HCT116 (cell line): ENCODE measurements at regions of chr4 and their contacts with region 1.

Region 1: DNA sequence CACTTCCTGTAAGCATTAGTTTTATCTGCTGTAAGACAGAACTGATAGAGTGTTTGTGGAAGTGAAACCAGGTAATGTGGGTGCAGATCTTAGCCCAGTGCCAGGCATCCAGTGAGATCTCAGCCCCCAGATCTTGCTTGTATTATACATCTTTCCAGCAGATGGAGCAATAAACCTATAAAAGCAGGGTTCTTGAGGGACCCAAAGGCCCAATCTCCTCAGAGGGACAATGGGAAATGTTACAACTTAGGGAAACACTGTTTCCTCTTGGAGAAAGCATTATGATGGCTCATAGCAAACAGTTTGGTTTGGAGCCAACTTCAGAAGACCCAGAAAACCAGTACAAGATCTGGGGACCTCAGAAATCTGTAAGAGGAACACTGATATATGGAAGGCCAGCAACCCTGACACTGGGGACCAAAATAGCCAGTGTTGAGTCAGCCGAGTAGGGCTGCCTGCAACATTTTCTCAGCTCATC is 206.3 kb downstream of the SLC7A11 start:
- DNase-seq: peak; percentile 53
- ATAC-seq: peak; percentile 96
- H3K4me3 ChIP-seq: no peak overlapping the region
- H3K27ac ChIP-seq: no peak overlapping the region
- H3K4me1 ChIP-seq: no peaks in the 10 kb centered on the region
- H3K27me3 ChIP-seq: no peaks in the 10 kb centered on the region
- CTCF ChIP-seq: peak; percentile 50 to 87 (median 71)
- POLR2A ChIP-seq: no peak
- RAD21 ChIP-seq: peak; percentile 95

Region 2: GRCh38 chr4:137735561-137736104 is 300.2 kb before region 1 on chr4:
- CTCF ChIA-PET with region 1: interaction called, 6 read pairs
- POLR2A ChIA-PET with region 1: no interaction called
- RAD21 ChIA-PET with region 1: no interaction called
- intact Hi-C with region 1: loop called (anchors 10 kb)
- DNase-seq: no peak
- ATAC-seq: no peak
- H3K4me3 ChIP-seq: no peak overlapping the region
- H3K27ac ChIP-seq: no peak overlapping the region
- H3K4me1 ChIP-seq: no peaks in the 10 kb centered on the region
- H3K27me3 ChIP-seq: no peaks in the 10 kb centered on the region
- CTCF ChIP-seq: no peak
- POLR2A ChIP-seq: no peak
- RAD21 ChIP-seq: no peak

Region 3: GRCh38 chr4:137981282-137981681 is 54.5 kb before region 1 on chr4:
- CTCF ChIA-PET with region 1: no interaction called
- POLR2A ChIA-PET with region 1: no interaction called
- RAD21 ChIA-PET with region 1: no interaction called
- intact Hi-C with region 1: no loop called
- DNase-seq: peak; percentile 31
- ATAC-seq: peak; percentile 73
- H3K4me3 ChIP-seq: no peak overlapping the region
- H3K27ac ChIP-seq: no peak overlapping the region
- H3K4me1 ChIP-seq: peaks cover 11 to 16% of the 10 kb centered on the region in 2 experiments
- H3K27me3 ChIP-seq: no peaks in the 10 kb centered on the region
- CTCF ChIP-seq: no peak; a peak in 2 of 6 replicates
- POLR2A ChIP-seq: no peak
- RAD21 ChIP-seq: 0 out of 2 replicates have a peak, but pooled peaks have one; percentile 10

Region 4: DNA sequence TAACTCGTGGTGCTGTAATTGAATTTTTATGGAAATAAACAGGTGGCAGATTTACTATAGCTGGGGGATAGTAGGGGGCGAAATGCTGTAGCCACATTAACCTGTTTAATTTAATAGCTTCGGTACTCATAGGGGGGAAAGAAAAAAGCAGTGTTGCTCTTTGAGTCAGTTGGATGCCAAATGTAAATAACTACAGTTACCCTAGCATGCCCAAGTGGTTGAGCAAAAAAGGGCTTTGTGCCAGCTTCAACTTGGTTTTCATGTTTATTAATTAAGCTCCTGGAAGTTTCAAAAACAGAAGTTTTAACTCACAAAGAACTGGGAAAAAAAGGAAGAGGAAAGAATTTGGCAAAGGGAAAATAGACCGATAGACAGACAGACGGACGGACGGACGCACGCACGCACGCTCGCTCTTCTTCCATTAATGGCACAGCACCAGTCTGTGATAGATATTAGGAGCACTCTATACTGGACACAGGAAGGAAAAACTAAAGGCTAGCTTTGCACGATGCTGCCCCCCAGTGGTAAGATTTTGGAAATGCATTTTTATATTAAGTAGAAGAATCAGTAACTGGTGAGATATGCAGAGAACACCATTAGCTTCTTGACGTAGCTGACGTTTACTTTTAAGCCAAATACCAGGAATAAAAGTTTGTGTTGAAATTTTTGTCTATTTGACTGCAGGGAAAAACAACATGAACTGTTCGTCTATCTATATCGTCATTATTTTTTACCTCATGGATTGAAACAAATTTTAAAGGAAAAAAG is 54.5 kb after region 1 on chr4:
- CTCF ChIA-PET with region 1: interaction called, 40 read pairs
- POLR2A ChIA-PET with region 1: interaction called, 4 read pairs
- RAD21 ChIA-PET with region 1: interaction called, 7 to 10 read pairs
- intact Hi-C with region 1: loop called (anchors 1 kb)
- DNase-seq: peak; percentile 76
- ATAC-seq: peak; percentile 94
- H3K4me3 ChIP-seq: peak overlapping the region; percentile 31 to 51
- H3K27ac ChIP-seq: no peak overlapping the region
- H3K4me1 ChIP-seq: peaks cover 0 to 13% of the 10 kb centered on the region in 2 experiments; a peak in 2 of 4 replicates
- H3K27me3 ChIP-seq: no peaks in the 10 kb centered on the region
- CTCF ChIP-seq: peak; percentile 66 to 83 (median 78)
- POLR2A ChIP-seq: no peak
- RAD21 ChIP-seq: peak; percentile 91

Region 5: DNA sequence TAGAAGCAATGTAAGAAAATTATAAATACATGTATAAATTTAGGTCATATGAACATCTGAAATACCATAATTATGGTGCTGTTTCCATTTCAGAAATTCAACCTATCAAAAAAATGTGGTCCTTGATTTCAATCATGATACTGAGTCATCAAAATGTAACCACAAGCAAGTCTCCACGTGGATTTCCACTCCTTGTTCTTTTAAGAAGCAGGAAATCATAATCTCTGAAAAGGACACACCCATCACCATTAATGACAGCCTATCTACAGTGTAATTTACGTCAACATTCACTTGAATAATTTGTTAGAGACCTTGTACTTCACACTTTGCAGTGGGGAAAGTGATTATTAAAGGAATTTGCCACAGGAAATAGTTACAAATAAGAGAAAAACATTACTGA is 224.0 kb after region 1 on chr4:
- CTCF ChIA-PET with region 1: no interaction called
- POLR2A ChIA-PET with region 1: no interaction called
- RAD21 ChIA-PET with region 1: no interaction called
- intact Hi-C with region 1: no loop called
- DNase-seq: peak; percentile 21
- ATAC-seq: no peak
- H3K4me3 ChIP-seq: no peak overlapping the region
- H3K27ac ChIP-seq: no peak overlapping the region
- H3K4me1 ChIP-seq: peaks cover 0 to 9% of the 10 kb centered on the region in 2 experiments; a peak in 2 of 4 replicates
- H3K27me3 ChIP-seq: no peaks in the 10 kb centered on the region
- CTCF ChIP-seq: no peak
- POLR2A ChIP-seq: no peak
- RAD21 ChIP-seq: no peak

Region 6: DNA sequence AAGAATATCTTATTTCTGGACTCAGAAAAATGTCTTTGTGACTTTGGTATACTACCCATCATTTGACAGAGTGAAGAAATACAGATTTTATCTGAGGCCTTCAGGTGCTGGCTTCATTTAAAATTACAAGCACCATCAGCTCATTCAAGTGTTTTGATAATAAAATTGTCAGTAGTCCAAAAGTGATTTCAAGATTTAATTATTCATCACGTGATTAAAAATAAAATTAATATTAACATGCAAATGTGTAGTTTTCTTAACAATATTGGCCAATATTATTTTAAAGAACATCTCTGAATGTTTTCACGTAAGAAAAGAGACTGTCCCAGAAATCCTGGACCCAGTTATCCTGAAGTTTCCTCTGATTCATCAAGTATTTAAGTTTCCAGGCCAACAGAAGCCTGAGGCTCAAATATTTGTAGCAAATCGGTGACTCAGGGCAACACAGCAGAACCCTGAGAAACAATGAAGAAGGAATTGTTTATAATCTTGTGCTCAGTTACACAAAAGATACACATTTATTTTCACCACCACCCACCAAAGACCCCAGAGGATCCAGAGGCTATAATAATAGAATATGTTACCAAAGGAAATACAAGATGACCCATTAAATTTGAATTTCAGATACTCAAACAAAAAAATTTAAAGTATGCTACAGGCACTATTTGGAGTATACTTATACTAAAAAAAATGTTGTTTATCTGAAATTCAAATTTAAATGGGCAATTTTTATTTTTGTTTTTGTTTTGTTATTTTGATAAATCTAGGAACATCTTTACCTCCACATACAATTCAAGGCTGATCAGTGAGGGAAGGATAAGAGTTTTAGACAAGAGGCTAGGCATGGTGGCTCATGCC is 240.2 kb after region 1 on chr4:
- CTCF ChIA-PET with region 1: no interaction called
- POLR2A ChIA-PET with region 1: no interaction called
- RAD21 ChIA-PET with region 1: no interaction called
- intact Hi-C with region 1: loop called (anchors 5 kb)
- DNase-seq: no peak
- ATAC-seq: no peak
- H3K4me3 ChIP-seq: no peak overlapping the region
- H3K27ac ChIP-seq: no peak overlapping the region
- H3K4me1 ChIP-seq: no peaks in the 10 kb centered on the region
- H3K27me3 ChIP-seq: no peaks in the 10 kb centered on the region
- CTCF ChIP-seq: no peak
- POLR2A ChIP-seq: no peak
- RAD21 ChIP-seq: no peak

Region 7: GRCh38 chr4:138405934-138406567 is 370.2 kb after region 1 on chr4:
- CTCF ChIA-PET with region 1: no interaction called
- POLR2A ChIA-PET with region 1: no interaction called
- RAD21 ChIA-PET with region 1: no interaction called
- intact Hi-C with region 1: no loop called
- DNase-seq: no peak
- ATAC-seq: no peak
- H3K4me3 ChIP-seq: no peak overlapping the region
- H3K27ac ChIP-seq: no peak overlapping the region
- H3K4me1 ChIP-seq: peaks cover 5 to 13% of the 10 kb centered on the region in 2 experiments
- H3K27me3 ChIP-seq: no peaks in the 10 kb centered on the region
- CTCF ChIP-seq: no peak
- POLR2A ChIP-seq: no peak
- RAD21 ChIP-seq: no peak

Region 8: GRCh38 chr4:138555584-138555983 is 519.8 kb after region 1 on chr4:
- CTCF ChIA-PET with region 1: interaction called, 14 read pairs
- POLR2A ChIA-PET with region 1: no interaction called
- RAD21 ChIA-PET with region 1: no interaction called
- intact Hi-C with region 1: no loop called
- DNase-seq: no peak
- ATAC-seq: peak; percentile 62
- H3K4me3 ChIP-seq: no peak overlapping the region
- H3K27ac ChIP-seq: no peak overlapping the region
- H3K4me1 ChIP-seq: 0 out of 4 replicates have a peak, but pooled peaks cover 0 to 4% of the 10 kb centered on the region in 2 experiments
- H3K27me3 ChIP-seq: no peaks in the 10 kb centered on the region
- CTCF ChIP-seq: peak; percentile 48 to 54 (median 52); a peak in 4 of 6 replicates
- POLR2A ChIP-seq: no peak
- RAD21 ChIP-seq: peak; percentile 50

Region 9: GRCh38 chr4:138588501-138588900 is 552.7 kb after region 1 on chr4:
- CTCF ChIA-PET with region 1: no interaction called
- POLR2A ChIA-PET with region 1: no interaction called
- RAD21 ChIA-PET with region 1: no interaction called
- intact Hi-C with region 1: loop called (anchors 2 kb)
- DNase-seq: no peak
- ATAC-seq: no peak
- H3K4me3 ChIP-seq: no peak overlapping the region
- H3K27ac ChIP-seq: no peak overlapping the region
- H3K4me1 ChIP-seq: no peaks in the 10 kb centered on the region
- H3K27me3 ChIP-seq: no peaks in the 10 kb centered on the region
- CTCF ChIP-seq: no peak
- POLR2A ChIP-seq: no peak
- RAD21 ChIP-seq: no peak

Region 10: DNA sequence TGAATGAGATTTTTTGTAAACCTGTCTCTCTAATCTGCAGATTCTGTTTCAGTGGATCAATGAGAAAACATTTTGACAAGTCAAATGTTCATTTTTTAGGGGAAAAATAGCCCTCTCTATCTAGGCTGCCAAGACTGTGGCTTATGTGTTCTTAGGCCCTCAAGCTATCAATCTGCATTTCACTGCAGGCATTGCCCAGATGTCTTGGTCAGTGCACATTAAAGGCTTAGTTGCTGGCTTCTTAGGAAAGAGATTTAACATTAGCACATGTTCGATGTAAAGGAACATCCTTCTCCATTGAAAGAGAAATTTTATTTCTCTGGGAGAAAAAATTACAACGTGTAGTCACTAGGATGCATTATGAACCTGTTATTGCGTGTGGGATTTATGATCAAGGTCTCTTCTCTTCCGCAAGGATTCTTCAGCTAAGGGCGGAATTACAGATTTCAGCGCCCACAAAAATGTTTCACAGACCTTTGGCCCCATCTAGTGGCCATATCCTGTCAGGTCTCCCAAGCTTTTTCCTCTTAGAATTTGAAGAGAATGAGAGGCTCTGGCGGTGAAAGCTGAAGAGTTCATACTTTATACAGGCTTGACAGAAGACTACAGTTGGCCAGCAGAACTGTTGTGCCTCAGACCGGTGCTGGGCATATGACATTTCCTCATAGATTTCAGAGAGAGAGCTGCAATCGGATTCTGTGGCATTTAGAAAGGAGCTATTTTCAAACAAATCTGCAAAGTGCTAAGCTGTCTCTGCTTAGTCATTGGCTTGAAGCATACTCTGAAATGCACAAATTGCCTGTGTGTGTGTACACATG is 835.1 kb after region 1 on chr4:
- CTCF ChIA-PET with region 1: interaction called, 8 read pairs
- POLR2A ChIA-PET with region 1: no interaction called
- RAD21 ChIA-PET with region 1: no interaction called
- intact Hi-C with region 1: loop called (anchors 2 kb)
- DNase-seq: peak; percentile 65
- ATAC-seq: peak; percentile 82
- H3K4me3 ChIP-seq: no peak overlapping the region
- H3K27ac ChIP-seq: no peak overlapping the region
- H3K4me1 ChIP-seq: peaks cover 0 to 9% of the 10 kb centered on the region in 2 experiments; a peak in 1 of 4 replicates
- H3K27me3 ChIP-seq: peaks cover 6% of the 10 kb centered on the region; the same call in 1 of the 2 replicates
- CTCF ChIP-seq: peak; percentile 71 to 87 (median 81)
- POLR2A ChIP-seq: no peak
- RAD21 ChIP-seq: peak; percentile 94